Endothelial cell of umbilical vein (primary cell): ENCODE measurements at regions of chr7 and their contacts with region 1.

Region 1: DNA sequence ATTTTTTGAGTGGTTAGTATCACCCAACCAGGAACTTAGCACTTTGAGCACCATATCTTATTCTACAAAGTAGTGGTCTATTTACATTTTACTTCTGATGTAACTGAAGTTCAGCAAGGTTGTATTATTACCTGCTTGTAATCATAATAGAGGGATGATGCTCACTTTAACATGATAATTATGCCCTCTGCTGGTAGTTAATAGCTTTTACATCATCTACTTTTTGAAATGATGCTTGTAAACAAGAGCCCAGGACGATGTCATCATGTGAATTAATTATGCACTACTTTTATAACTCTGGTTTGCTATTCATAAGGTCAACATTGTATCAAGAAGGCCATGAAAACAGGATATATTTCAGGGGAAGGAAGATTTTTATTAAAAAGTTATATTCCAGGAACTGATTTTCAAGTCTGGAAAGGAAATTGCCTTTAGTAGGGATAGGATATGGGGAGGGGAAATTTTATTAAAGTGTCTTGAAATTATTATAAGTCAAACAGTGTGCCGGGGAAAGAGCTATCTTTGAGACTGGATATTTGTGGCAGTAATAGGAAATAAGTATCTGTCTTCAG is 80.3 kb upstream of the SCIN start:
- DNase-seq: peak; percentile 48
- H3K4me3 ChIP-seq: no peak overlapping the region
- H3K27ac ChIP-seq: no peak overlapping the region
- H3K4me1 ChIP-seq: no peaks in the 10 kb centered on the region
- H3K27me3 ChIP-seq: no peaks in the 10 kb centered on the region
- CTCF ChIP-seq: peak; percentile 25 to 28
- POLR2A ChIP-seq: no peak

Region 2: DNA sequence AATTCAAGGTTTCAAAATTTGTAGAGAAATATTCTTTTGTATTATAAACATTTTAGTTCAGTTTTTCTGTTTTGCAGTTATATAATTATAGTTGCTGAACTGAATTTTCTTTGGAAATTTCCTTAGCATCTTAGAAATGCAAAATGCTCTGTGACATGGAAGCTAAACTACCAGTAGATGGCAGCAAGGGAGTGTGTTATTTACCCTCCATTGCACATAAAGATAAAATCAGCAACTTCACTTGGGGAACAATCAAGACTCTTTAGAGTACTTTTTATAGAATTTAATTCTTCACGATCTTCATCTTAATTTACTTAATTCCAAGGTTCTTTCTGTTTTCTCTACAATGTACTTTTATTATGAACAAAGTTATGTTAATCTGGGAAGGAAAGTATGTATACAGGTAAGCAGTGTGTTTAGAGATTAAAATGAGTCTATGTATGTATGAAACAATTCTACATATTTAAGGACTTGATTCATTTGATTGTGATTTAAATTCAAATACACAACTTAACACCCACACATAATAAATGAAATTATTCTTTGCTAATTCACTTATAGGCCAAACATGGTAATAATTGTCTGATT is 1062.4 kb before region 1 on chr7:
- CTCF ChIA-PET with region 1: interaction called, 6 read pairs
- POLR2A ChIA-PET with region 1: no interaction called
- dilution Hi-C with region 1: no loop called
- intact Hi-C with region 1: loop called (anchors 5 kb)
- DNase-seq: peak; percentile 86
- H3K4me3 ChIP-seq: no peak overlapping the region
- H3K27ac ChIP-seq: peak overlapping the region; percentile 1
- H3K4me1 ChIP-seq: peaks cover 5% of the 10 kb centered on the region
- H3K27me3 ChIP-seq: no peaks in the 10 kb centered on the region
- CTCF ChIP-seq: peak; percentile 43 to 48
- POLR2A ChIP-seq: no peak

Region 3: DNA sequence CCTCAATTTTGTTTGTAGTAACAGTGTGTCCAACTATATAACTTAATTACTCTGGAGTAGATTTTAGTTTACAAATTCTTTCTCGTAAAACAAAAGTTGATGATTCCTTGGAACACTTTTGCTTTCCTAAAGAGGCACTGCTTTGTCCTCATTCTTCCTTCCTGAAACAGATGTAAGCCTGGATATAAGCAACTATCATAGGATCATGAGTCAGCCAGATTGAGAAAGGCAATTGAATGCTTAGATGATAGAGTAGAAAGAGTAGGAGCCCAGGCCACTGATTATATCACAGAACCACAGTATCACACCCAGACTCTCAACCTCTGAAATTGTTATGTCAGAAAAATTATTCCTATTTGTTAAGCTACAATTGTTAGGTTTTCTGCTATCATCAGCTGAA is 209.2 kb before region 1 on chr7:
- CTCF ChIA-PET with region 1: no interaction called
- POLR2A ChIA-PET with region 1: no interaction called
- dilution Hi-C with region 1: no loop called
- intact Hi-C with region 1: no loop called
- DNase-seq: peak; percentile 15
- H3K4me3 ChIP-seq: no peak overlapping the region
- H3K27ac ChIP-seq: no peak overlapping the region
- H3K4me1 ChIP-seq: no peaks in the 10 kb centered on the region
- H3K27me3 ChIP-seq: peaks cover 0 to 2% of the 10 kb centered on the region in 2 experiments
- CTCF ChIP-seq: no peak
- POLR2A ChIP-seq: no peak

Region 4: GRCh38 chr7:12357508-12357907 is 132.7 kb before region 1 on chr7:
- CTCF ChIA-PET with region 1: no interaction called
- POLR2A ChIA-PET with region 1: no interaction called
- dilution Hi-C with region 1: no loop called
- intact Hi-C with region 1: no loop called
- DNase-seq: no peak
- H3K4me3 ChIP-seq: no peak overlapping the region
- H3K27ac ChIP-seq: no peak overlapping the region
- H3K4me1 ChIP-seq: no peaks in the 10 kb centered on the region
- H3K27me3 ChIP-seq: no peaks in the 10 kb centered on the region
- CTCF ChIP-seq: no peak
- POLR2A ChIP-seq: no peak

Region 5: GRCh38 chr7:12389089-12389700 is 101.0 kb before region 1 on chr7:
- CTCF ChIA-PET with region 1: interaction called, 57 read pairs
- POLR2A ChIA-PET with region 1: no interaction called
- dilution Hi-C with region 1: no loop called
- intact Hi-C with region 1: loop called (anchors 1 kb)
- DNase-seq: peak; percentile 59
- H3K4me3 ChIP-seq: no peak overlapping the region
- H3K27ac ChIP-seq: no peak overlapping the region
- H3K4me1 ChIP-seq: no peaks in the 10 kb centered on the region
- H3K27me3 ChIP-seq: no peaks in the 10 kb centered on the region
- CTCF ChIP-seq: peak; percentile 79
- POLR2A ChIP-seq: no peak

Region 6: GRCh38 chr7:12436896-12437535 is 53.2 kb before region 1 on chr7:
- CTCF ChIA-PET with region 1: interaction called, 79 read pairs
- POLR2A ChIA-PET with region 1: no interaction called
- dilution Hi-C with region 1: no loop called
- intact Hi-C with region 1: loop called (anchors 1 kb)
- DNase-seq: no peak
- H3K4me3 ChIP-seq: no peak overlapping the region
- H3K27ac ChIP-seq: no peak overlapping the region
- H3K4me1 ChIP-seq: no peaks in the 10 kb centered on the region
- H3K27me3 ChIP-seq: peaks cover 6 to 8% of the 10 kb centered on the region in 2 experiments
- CTCF ChIP-seq: no peak
- POLR2A ChIP-seq: no peak

Region 7: DNA sequence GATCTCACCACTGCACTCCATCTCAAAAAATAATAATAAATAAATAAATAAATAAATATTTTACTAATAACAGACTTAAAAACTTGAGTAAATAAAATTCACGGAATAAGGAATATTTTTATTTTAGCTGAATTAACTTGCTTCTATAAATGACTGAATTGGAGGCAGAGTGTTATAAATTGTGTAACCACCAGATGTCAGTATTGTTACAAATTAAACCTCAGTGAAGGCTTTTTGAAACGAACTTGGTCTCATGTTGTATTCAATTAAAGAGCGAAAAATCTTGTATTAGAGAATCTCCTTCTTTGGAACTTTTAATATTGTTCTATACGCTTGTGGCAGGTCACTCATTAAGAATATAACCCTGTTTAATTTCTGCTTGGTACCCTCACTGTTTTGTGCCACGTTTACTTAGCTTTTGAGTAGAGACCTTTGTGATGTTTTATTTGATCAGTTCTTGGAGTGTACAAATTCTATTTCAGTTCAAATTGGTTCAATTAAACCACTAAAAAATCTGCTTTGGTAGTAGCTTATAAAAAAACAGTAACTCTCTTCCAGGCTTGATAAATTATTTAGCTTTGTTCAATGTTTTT is 34.7 kb after region 1 on chr7:
- CTCF ChIA-PET with region 1: interaction called, 11 read pairs
- POLR2A ChIA-PET with region 1: no interaction called
- dilution Hi-C with region 1: no loop called
- intact Hi-C with region 1: no loop called
- DNase-seq: peak; percentile 75
- H3K4me3 ChIP-seq: no peak overlapping the region
- H3K27ac ChIP-seq: no peak overlapping the region
- H3K4me1 ChIP-seq: no peaks in the 10 kb centered on the region
- H3K27me3 ChIP-seq: peaks cover 2 to 24% of the 10 kb centered on the region in 2 experiments
- CTCF ChIP-seq: peak; percentile 7 to 33
- POLR2A ChIP-seq: no peak